ENCODE measurements at regions of chr2 and their contacts with region 1.

Region 1: GRCh38 chr2:6909431-6910385 is 7.5 kb upstream of the RNF144A start:
- DNase-seq: peak; percentile 87
- ATAC-seq: peak; percentile 97
- H3K4me3 ChIP-seq: no peak overlapping the region; the same call in 1 of the 2 replicates
- H3K27ac ChIP-seq: peak overlapping the region; percentile 90
- H3K4me1 ChIP-seq: peaks cover 30% of the 10 kb centered on the region
- H3K27me3 ChIP-seq: no peaks in the 10 kb centered on the region
- CTCF ChIP-seq: no peak
- EP300 ChIP-seq: peak; percentile 94
- POLR2A ChIP-seq: no peak
- RAD21 ChIP-seq: 0 out of 2 replicates have a peak, but pooled peaks have one; percentile 5

Region 2: GRCh38 chr2:6826081-6826913 is 83.4 kb before region 1 on chr2:
- CTCF ChIA-PET with region 1: no interaction called
- POLR2A ChIA-PET with region 1: no interaction called
- RAD21 ChIA-PET with region 1: no interaction called
- SMC1A ChIA-PET with region 1: interaction called, 3 read pairs
- in situ Hi-C with region 1: no loop called
- intact Hi-C with region 1: loop called (anchors 2 kb)
- DNase-seq: peak; percentile 58
- ATAC-seq: peak; percentile 97
- H3K4me3 ChIP-seq: no peak overlapping the region
- H3K27ac ChIP-seq: no peak overlapping the region
- H3K4me1 ChIP-seq: no peaks in the 10 kb centered on the region
- H3K27me3 ChIP-seq: no peaks in the 10 kb centered on the region
- CTCF ChIP-seq: peak; percentile 67 to 86 (median 70)
- EP300 ChIP-seq: peak in 1 of 2 experiments; percentile 19; a peak in 1 of 4 replicates
- POLR2A ChIP-seq: no peak
- RAD21 ChIP-seq: peak; percentile 74

Region 3: GRCh38 chr2:6845312-6845711 is 64.4 kb before region 1 on chr2:
- CTCF ChIA-PET with region 1: no interaction called
- POLR2A ChIA-PET with region 1: no interaction called
- RAD21 ChIA-PET with region 1: no interaction called
- SMC1A ChIA-PET with region 1: no interaction called
- in situ Hi-C with region 1: no loop called
- intact Hi-C with region 1: no loop called
- DNase-seq: no peak
- ATAC-seq: no peak
- H3K4me3 ChIP-seq: no peak overlapping the region
- H3K27ac ChIP-seq: no peak overlapping the region
- H3K4me1 ChIP-seq: no peaks in the 10 kb centered on the region
- H3K27me3 ChIP-seq: no peaks in the 10 kb centered on the region
- CTCF ChIP-seq: no peak
- EP300 ChIP-seq: no peak
- POLR2A ChIP-seq: no peak
- RAD21 ChIP-seq: no peak

Region 4: DNA sequence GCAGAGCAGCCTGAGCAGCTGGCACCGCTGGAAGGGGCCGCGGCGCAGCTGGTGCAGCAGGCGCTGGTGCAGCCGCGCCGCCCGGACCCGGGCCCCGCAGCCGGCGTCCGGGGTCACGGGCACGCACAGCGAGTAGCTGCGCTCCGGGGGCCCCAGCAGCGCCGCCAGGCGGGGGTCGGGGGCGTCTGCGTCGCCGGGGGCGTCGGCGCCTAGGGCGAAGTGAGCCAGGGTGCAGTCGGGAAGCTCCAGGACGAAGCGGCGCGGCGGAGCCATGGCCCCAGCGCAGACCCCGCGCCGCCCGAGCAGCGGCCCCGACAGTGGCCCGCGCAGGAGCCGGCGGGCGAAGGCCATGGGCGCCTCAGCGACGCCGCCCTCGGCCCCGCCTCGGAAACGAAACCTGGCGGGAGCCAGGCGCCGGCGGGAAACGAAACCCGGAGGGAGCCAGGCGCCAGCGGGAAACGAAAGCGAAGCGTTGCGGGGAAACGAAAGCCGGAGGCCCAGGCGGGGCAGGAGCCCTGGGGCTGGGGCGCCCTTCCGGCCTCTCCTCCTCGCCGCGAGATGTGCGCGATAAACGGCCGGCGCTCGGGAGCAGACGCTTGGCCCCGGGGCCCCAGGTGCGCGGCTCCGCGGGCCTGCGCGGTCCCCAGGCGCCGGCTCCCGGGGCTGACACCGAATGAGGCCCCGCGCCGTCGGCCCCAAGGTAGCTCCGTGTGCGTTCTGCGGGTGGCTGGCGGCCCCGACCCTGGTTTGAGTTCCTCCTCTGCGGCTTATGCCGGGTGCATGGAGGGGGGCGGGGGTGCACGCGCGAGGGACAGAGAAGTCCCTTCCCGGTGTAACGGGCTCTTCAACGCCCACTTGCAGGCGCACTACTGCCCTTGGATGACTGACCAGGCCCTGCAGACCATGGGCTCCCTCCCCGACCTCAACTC is 44.1 kb before region 1 on chr2 and contains the start of gene CMPK2:
- CTCF ChIA-PET with region 1: interaction called, 20 read pairs
- POLR2A ChIA-PET with region 1: interaction called, 5 read pairs
- RAD21 ChIA-PET with region 1: no interaction called
- SMC1A ChIA-PET with region 1: interaction called, 3 read pairs
- in situ Hi-C with region 1: no loop called
- intact Hi-C with region 1: no loop called
- DNase-seq: peak; percentile 33
- ATAC-seq: peak; percentile 87
- H3K4me3 ChIP-seq: peak within 1 kb of the TSS; percentile 77
- H3K27ac ChIP-seq: peak within 1 kb of the TSS; percentile 68
- H3K4me1 ChIP-seq: peaks cover 12% of the 10 kb centered on the region; the same call in 1 of the 2 replicates
- H3K27me3 ChIP-seq: no peaks in the 10 kb centered on the region; a peak in 2 of 4 replicates
- CTCF ChIP-seq: peak; percentile 16 to 38 (median 28); a peak in 2 of 6 replicates
- EP300 ChIP-seq: no peak
- POLR2A ChIP-seq: peak; percentile 73
- RAD21 ChIP-seq: no peak
- polyA plus RNA-seq, gene CMPK2: 1.9 to 2.3 TPM

Region 5: DNA sequence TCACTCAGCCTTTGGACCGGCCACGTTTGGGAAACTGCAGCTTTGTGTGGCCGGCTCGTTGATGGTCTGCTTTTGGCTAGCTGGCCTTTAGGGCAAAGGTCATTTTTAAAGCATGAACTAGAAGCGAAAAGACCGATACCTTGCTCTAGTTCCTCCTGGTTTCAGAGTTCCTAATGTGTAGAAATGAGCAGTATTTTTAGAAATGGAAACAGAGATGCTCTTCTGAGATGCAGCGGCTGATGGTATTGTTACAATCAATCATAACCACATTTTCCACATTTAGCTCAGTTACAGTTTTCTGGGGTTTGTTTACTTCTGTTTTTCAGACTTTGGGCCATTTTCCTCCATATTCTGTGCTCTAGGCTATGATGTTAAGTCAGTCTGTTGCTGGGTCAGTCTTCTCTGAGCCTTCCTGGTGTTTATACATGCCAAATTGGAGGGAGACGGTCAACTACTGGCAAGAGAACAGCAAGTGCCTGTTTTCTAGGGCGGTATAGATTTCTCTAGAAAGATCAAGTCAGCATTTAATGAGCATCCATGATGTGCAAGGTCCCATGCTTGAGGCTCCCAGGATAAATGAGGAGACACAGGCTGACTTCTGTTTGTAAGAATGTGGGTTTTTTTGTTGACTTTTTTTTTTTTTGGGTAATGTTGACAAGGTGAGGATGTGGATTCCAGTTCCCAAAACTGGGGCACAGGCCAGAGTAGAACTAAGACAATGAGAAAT is 35.5 kb after region 1 on chr2:
- CTCF ChIA-PET with region 1: interaction called, 19 read pairs
- POLR2A ChIA-PET with region 1: interaction called, 11 read pairs
- RAD21 ChIA-PET with region 1: interaction called, 16 read pairs
- SMC1A ChIA-PET with region 1: interaction called, 21 read pairs
- in situ Hi-C with region 1: no loop called
- intact Hi-C with region 1: no loop called
- DNase-seq: peak; percentile 72
- ATAC-seq: peak; percentile 94
- H3K4me3 ChIP-seq: no peak overlapping the region
- H3K27ac ChIP-seq: 0 out of 2 replicates have a peak overlapping the region, but pooled peaks have one; percentile 6
- H3K4me1 ChIP-seq: peaks cover 25% of the 10 kb centered on the region
- H3K27me3 ChIP-seq: no peaks in the 10 kb centered on the region
- CTCF ChIP-seq: no peak
- EP300 ChIP-seq: peak; percentile 55; a peak in 2 of 4 replicates
- POLR2A ChIP-seq: no peak
- RAD21 ChIP-seq: no peak

Region 6: DNA sequence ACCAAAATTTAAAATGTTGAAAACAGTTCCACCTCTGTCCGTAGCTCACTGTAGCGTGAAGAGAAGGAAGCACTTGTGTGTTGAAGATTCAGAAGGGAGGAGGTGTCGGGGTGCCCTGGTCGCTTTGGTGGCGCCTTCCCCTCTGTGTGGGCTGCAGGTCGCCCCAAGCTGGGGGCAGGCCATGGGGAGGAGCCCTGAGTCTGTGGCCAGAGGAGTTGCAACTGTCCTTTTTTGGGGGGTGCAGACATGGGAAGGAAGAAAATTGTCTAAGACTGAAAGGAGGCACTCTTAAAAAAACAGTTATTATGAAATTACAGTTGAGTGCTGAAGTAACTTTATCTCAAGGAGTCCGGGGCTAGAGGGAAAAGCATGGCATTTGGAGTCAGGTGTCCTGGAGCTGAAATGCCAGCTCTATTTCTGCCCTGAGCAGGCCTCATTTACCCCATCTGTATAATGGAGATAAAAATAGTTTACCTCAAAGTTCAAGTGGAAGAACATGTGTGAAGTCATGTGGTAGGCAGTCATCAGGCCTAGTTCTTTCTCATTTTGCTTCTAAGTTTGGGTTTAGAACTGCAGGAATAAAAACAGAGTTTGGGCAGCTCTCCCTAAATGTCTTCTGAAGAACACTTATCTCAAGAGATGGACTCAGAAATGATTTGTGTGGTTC is 89.6 kb after region 1 on chr2:
- CTCF ChIA-PET with region 1: interaction called, 6 read pairs
- POLR2A ChIA-PET with region 1: no interaction called
- RAD21 ChIA-PET with region 1: interaction called, 15 read pairs
- SMC1A ChIA-PET with region 1: interaction called, 19 read pairs
- in situ Hi-C with region 1: no loop called
- intact Hi-C with region 1: no loop called
- DNase-seq: peak; percentile 37
- ATAC-seq: peak; percentile 97
- H3K4me3 ChIP-seq: peak overlapping the region; percentile 7; the same call in 1 of the 2 replicates
- H3K27ac ChIP-seq: peak overlapping the region; percentile 42; the same call in 1 of the 2 replicates
- H3K4me1 ChIP-seq: peaks cover 17% of the 10 kb centered on the region
- H3K27me3 ChIP-seq: no peaks in the 10 kb centered on the region
- CTCF ChIP-seq: no peak
- EP300 ChIP-seq: no peak
- POLR2A ChIP-seq: no peak
- RAD21 ChIP-seq: no peak

Region 7: GRCh38 chr2:7014174-7014640 is 104.5 kb after region 1 on chr2:
- CTCF ChIA-PET with region 1: interaction called, 7 read pairs
- POLR2A ChIA-PET with region 1: no interaction called
- RAD21 ChIA-PET with region 1: interaction called, 11 read pairs
- SMC1A ChIA-PET with region 1: interaction called, 16 read pairs
- in situ Hi-C with region 1: no loop called
- intact Hi-C with region 1: no loop called
- DNase-seq: no peak
- ATAC-seq: peak; percentile 86
- H3K4me3 ChIP-seq: no peak overlapping the region
- H3K27ac ChIP-seq: no peak overlapping the region
- H3K4me1 ChIP-seq: no peaks in the 10 kb centered on the region
- H3K27me3 ChIP-seq: no peaks in the 10 kb centered on the region; a peak in 1 of 4 replicates
- CTCF ChIP-seq: peak; percentile 37 to 61 (median 58); a peak in 5 of 6 replicates
- EP300 ChIP-seq: no peak
- POLR2A ChIP-seq: no peak
- RAD21 ChIP-seq: peak; percentile 42